GM23248 (cell line): ENCODE measurements at regions of chr5 and their contacts with region 1.

Region 1: DNA sequence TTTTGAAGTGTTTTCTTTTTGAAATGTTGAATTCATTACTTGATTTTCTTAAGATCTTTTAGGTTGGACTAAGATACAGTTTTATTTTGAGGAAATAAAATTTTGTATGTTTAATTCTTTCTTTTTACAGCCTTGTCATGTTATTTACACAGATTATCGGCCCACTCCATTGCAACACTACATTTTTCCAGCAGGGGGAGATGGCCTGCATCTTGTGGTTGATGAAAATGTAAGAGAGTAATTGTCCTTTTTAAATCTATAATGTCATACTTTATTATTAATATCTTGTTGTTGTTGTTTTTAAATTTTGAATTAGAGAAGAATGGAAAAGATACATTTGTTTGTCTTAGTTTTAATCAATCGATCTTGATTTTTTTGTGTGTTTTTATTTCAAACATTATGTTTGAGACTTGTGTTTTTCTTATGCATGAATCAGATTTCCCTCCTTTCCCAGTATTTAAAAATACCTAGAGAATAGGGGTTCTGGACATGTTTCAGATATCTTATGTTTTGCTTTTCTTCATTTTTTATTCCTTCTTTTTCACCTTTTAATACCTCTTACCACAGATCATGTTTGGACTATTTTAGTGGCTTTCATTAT is 36.7 kb downstream of the MTREX start:
- DNase-seq: peak; percentile 53
- H3K4me3 ChIP-seq: no peak overlapping the region
- H3K27ac ChIP-seq: peak overlapping the region; percentile 29
- H3K4me1 ChIP-seq: no peaks in the 10 kb centered on the region
- H3K27me3 ChIP-seq: no peaks in the 10 kb centered on the region

Region 2: GRCh38 chr5:55072666-55073065 is 271.8 kb before region 1 on chr5:
- in situ Hi-C with region 1: no loop called
- DNase-seq: peak; percentile 2
- H3K4me3 ChIP-seq: no peak overlapping the region
- H3K27ac ChIP-seq: no peak overlapping the region
- H3K4me1 ChIP-seq: no peaks in the 10 kb centered on the region
- H3K27me3 ChIP-seq: no peaks in the 10 kb centered on the region

Region 3: DNA sequence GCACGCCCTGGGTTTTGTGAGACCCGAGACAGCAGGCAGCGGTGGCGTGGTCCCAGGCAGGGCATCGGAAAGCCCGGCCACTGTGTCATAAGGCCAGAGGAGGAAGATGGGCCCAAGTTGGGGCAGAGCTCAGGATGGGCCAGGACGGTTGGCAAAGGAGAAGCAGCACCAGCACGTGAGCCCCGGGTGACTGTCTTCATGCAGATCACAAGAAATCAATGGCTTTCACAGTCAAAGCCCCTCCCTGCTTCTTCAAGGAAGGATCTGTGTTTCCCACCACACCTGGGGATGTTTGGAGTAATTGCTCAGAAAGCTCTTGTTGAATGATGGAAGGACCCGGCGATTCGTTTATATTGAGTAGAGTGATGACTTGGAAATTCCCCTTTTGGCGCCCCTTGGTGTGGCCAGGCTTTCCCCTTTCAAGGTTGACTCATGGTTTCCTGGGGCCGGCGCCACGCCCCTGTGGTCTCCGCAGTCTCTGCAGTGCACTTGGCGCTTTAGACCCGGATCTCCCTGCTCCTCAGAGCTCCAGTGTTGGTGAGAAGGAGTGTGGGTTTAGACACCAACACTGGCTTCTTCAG is 558.7 kb after region 1 on chr5:
- in situ Hi-C with region 1: loop called (anchors 25 kb)
- DNase-seq: no peak
- H3K4me3 ChIP-seq: no peak overlapping the region
- H3K27ac ChIP-seq: no peak overlapping the region
- H3K4me1 ChIP-seq: peaks cover 21% of the 10 kb centered on the region
- H3K27me3 ChIP-seq: no peaks in the 10 kb centered on the region